ENCODE measurements at regions of chr5 and their contacts with region 1.

Region 1: DNA sequence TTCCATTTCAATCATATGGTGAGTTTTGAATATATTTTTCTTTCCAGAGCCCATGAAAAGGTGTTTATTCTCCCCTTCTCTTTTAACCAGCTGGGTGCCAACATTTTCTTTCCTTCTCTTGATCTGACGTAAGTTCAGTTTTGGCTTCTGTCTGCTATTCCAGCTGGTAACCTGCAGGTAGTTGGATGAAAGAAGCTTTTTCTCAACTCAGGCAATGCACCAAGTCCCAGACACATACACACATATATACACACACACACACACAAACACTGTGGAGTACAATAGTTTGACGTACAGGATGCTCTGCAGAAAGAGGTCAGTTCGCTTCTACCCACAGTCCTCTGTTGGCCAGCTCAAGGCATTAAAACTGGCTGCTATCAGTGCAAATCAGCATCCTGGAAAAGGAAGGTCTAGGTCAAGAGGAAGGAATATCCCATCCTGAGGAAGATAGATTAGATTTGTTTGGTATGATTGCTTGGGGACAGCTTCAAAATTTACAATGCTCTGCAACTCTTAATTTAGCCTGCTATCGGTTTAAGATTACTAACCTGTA is 214.3 kb upstream of the SEMA6A start:
- DNase-seq: peak in 3 of 5 donors; percentile 38 to 51 (median 47)
- ATAC-seq: peak; percentile 88 to 98 (median 90)
- H3K4me3 ChIP-seq: no peak overlapping the region
- H3K27ac ChIP-seq: peak overlapping the region in 8 of 12 donors; percentile 25 to 67 (median 52)
- H3K4me1 ChIP-seq: peaks cover 0 to 10% (median 2%) of the 10 kb centered on the region in 12 donors
- H3K27me3 ChIP-seq: no peaks in the 10 kb centered on the region
- CTCF ChIP-seq: no peak
- POLR2A ChIP-seq: no peak

Region 2: DNA sequence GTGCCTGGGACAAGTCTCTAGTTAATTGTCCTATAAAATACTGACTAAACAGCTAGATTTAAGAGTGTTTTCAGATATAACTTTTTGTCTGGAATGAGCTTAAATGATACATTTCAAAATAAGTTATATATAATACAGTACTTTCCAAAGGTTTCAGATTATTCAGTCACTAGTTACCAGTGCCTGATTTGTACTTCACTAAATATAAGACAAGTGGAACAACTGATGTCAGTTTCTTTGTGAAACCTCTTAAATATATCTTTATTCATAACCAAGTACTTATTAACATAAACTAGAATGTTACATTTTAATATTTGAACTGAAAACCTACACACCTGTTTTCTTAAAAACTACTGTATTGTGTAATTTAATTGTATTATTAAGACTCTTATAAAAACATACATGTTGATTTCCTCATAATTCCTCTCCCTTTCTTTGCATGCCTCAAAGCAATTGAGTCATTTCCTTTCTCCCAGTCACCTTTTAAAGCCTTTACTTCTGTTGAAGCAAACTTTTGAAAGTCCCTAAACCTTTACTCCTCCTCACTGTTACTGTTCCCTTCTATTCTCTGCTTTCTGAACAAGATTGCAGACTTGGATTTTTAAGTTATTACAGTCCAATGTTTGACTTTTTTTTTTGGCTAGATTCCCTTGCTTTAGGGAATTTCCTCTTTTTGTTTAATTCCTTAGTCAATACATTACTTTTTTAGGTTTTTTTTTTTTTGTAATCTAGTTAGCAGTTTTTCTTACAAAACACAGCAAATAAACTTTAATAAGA is 205.7 kb before region 1 on chr5:
- intact Hi-C with region 1: loop called in 3 of 10 experiments (anchors 5 to 10 kb)
- DNase-seq: no peak
- ATAC-seq: no peak
- H3K4me3 ChIP-seq: no peak overlapping the region
- H3K27ac ChIP-seq: no peak overlapping the region
- H3K4me1 ChIP-seq: peaks cover 0 to 4% (median 0%) of the 10 kb centered on the region in 12 donors
- H3K27me3 ChIP-seq: no peaks in the 10 kb centered on the region
- CTCF ChIP-seq: no peak
- POLR2A ChIP-seq: no peak

Region 3: DNA sequence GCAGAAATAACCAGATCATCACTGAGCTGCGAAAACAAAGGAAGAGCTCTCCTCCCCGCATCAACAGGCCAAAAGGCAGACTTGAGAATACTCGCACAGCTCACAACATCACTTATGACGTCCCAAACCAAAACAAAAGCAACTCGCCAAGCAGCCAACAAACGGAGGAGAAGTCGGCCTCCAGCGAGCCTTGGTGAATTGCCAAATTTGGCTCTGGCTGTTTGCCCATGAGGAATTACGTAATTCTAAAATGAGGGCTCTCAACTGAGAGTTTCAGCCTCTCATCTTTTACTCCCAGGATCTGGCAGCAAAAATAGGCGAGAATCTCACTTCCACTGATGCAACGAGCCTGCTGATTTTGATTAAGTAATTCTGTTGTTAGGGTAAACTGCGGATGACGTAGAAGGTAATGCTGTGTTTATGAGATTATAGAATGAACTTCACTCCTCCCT is 162.6 kb before region 1 on chr5:
- intact Hi-C with region 1: no loop called
- DNase-seq: peak; percentile 70 to 88 (median 76)
- ATAC-seq: peak; percentile 69 to 96 (median 82)
- H3K4me3 ChIP-seq: peak overlapping the region in 6 of 12 donors; percentile 2 to 34 (median 24)
- H3K27ac ChIP-seq: peak overlapping the region in 10 of 12 donors; percentile 5 to 76 (median 57)
- H3K4me1 ChIP-seq: peaks cover 0 to 21% (median 7%) of the 10 kb centered on the region in 12 donors
- H3K27me3 ChIP-seq: no peaks in the 10 kb centered on the region
- CTCF ChIP-seq: no peak
- POLR2A ChIP-seq: no peak

Region 4: DNA sequence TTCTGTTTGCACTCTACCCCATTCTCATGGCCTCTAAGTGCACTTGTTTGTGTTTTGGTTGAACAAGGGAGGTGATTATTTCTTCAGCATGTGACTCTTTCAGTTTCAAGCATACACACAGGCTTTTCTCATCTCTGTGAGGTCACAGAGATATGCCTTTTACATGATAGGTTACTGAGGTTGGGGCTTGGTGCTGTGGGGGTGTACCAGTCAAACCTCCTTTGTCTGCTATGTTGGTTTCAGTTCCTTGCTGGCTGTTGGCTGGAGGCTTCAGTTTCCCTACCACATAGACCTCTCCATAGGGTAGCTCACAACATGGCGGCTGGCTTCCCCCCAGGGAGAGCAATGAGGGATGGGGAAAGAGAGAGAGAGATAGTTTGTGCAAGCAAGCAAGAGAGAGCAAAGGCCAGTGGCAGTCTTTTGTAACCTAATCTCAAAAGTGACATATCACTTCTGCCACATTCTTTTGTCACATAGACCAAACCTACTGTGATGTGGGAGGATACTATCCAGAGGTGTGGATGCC is 117.7 kb before region 1 on chr5:
- intact Hi-C with region 1: loop called in 1 of 10 experiments (anchors 10 kb)
- DNase-seq: no peak
- ATAC-seq: no peak
- H3K4me3 ChIP-seq: no peak overlapping the region
- H3K27ac ChIP-seq: no peak overlapping the region
- H3K4me1 ChIP-seq: peaks cover 0 to 10% (median 6%) of the 10 kb centered on the region in 12 donors
- H3K27me3 ChIP-seq: no peaks in the 10 kb centered on the region
- CTCF ChIP-seq: no peak
- POLR2A ChIP-seq: no peak

Region 5: GRCh38 chr5:116709082-116709481 is 79.8 kb before region 1 on chr5:
- intact Hi-C with region 1: no loop called
- DNase-seq: no peak
- ATAC-seq: no peak
- H3K4me3 ChIP-seq: no peak overlapping the region
- H3K27ac ChIP-seq: no peak overlapping the region
- H3K4me1 ChIP-seq: no peaks in the 10 kb centered on the region
- H3K27me3 ChIP-seq: no peaks in the 10 kb centered on the region
- CTCF ChIP-seq: no peak
- POLR2A ChIP-seq: no peak

Region 6: DNA sequence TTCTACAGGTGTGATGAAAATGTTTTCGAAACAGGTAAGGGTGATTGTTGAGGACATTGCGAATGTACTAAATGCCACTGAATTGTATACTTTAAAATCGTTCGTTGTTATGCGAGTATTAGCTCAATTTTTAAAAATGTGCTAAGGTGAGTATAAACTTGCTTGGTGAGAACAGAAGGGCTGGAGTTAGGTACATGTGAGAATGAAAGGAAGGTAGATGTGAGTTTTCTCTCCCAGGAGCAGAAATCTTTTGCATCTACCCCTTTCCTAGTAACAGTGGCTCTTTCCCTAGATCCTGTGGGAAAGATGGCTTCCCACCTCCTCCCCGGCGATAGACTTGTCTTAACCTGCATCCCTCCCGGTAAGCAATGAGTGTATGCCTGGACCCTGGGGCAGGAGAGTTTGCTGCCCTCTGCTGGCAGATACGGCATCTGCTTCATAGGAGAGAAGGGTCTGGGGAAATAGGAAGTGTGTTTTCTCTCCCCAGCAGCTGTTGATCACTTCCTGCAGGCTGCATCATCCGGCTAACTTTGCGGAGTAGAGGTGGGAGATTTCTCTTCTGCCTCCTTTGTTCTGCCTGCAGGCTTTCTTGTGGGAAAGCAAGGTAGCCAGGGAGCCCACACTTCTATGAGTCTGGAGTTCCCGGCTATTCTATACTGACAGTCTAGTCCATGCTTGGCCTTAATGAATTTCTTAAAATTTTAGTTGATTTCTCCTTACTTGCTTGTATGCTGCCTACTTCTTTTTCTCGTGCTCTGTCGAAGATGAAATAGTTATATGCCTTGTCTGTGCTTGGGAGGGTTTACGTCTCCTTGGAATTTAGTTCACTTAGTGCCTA is 159.0 kb after region 1 on chr5:
- intact Hi-C with region 1: loop called in 2 of 10 experiments (anchors 10 kb)
- DNase-seq: peak; percentile 42 to 68 (median 62)
- ATAC-seq: peak; percentile 81 to 89 (median 88)
- H3K4me3 ChIP-seq: no peak overlapping the region
- H3K27ac ChIP-seq: no peak overlapping the region
- H3K4me1 ChIP-seq: peaks cover 0 to 6% (median 0%) of the 10 kb centered on the region in 12 donors
- H3K27me3 ChIP-seq: no peaks in the 10 kb centered on the region
- CTCF ChIP-seq: peak; percentile 54 to 82 (median 72)
- POLR2A ChIP-seq: no peak

Region 7: GRCh38 chr5:117131048-117131679 is 342.2 kb after region 1 on chr5:
- intact Hi-C with region 1: loop called in 1 of 10 experiments (anchors 5 kb)
- DNase-seq: no peak
- ATAC-seq: no peak
- H3K4me3 ChIP-seq: no peak overlapping the region
- H3K27ac ChIP-seq: no peak overlapping the region
- H3K4me1 ChIP-seq: peaks cover 0 to 16% (median 0%) of the 10 kb centered on the region in 12 donors
- H3K27me3 ChIP-seq: no peaks in the 10 kb centered on the region
- CTCF ChIP-seq: no peak
- POLR2A ChIP-seq: no peak

Measured in heart left ventricle (tissue), 16 donors.